ENCODE measurements at regions of chr5 and their contacts with region 1.

Region 1: GRCh38 chr5:98905857-98906690 is 22.7 kb downstream of the CHD1 start:
- DNase-seq: no peak
- ATAC-seq: peak; percentile 61

Region 2: GRCh38 chr5:99032234-99033013 is 126.3 kb after region 1 on chr5:
- intact Hi-C with region 1: loop called in 1 of 2 experiments (anchors 5 kb)
- DNase-seq: peak; percentile 59 to 67
- ATAC-seq: peak; percentile 64

Region 3: DNA sequence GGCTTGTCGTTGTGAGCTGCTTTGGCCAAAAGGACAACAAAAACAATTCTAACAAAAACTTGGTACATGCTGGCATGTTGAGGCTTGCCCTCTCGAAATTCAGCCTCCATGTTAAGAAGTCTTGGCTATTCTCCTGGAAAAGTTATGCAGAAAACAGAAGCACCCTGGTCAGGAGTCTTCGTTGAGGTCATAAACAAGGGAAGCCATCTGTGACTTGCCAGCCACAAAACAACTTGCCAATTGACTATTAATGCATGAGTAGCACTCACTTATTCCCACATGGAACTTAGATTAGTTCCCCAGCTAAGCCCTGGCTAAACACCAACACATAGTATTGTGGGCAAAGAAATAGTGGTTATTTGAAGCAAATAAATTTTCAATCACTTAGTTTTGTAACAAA is 543.7 kb after region 1 on chr5:
- intact Hi-C with region 1: no loop called
- DNase-seq: no peak
- ATAC-seq: no peak